B cell (primary cell): ENCODE measurements at regions of chr5 and their contacts with region 1.

Region 1: DNA sequence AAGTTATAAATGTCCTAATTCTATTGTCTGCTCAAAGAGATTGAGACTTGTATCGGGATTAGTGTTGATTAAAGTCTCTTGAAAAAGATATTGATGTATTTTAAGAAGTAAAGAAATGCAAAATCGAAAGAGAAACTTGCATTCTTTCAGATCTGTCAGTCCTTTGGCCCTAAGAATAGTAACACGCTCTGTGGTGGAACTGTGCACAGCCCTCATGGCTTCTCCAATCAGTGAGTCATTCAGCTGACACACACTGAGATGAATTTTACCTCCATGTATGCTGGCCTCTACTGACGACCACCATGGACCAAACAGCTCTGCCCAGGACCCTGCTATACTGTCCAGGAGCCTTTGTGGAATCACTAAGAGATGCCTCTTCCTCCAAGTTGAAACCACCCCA is 232.4 kb downstream of the ESM1 start:
- DNase-seq: peak; percentile 47
- ATAC-seq: peak; percentile 84
- H3K4me3 ChIP-seq: peak overlapping the region in 4 of 5 experiments; percentile 5 to 54 (median 21)
- H3K4me3 Mint-ChIP-seq: peak overlapping the region; percentile 55
- H3K27ac ChIP-seq: peak overlapping the region; percentile 67 to 75
- H3K27ac Mint-ChIP-seq: peak overlapping the region; percentile 87
- H3K4me1 ChIP-seq: peaks cover 48 to 57% of the 10 kb centered on the region in 2 donors
- H3K4me1 Mint-ChIP-seq: peaks cover 61% of the 10 kb centered on the region
- H3K27me3 ChIP-seq: no peaks in the 10 kb centered on the region
- H3K27me3 Mint-ChIP-seq: no peaks in the 10 kb centered on the region
- CTCF ChIP-seq: no peak

Region 2: DNA sequence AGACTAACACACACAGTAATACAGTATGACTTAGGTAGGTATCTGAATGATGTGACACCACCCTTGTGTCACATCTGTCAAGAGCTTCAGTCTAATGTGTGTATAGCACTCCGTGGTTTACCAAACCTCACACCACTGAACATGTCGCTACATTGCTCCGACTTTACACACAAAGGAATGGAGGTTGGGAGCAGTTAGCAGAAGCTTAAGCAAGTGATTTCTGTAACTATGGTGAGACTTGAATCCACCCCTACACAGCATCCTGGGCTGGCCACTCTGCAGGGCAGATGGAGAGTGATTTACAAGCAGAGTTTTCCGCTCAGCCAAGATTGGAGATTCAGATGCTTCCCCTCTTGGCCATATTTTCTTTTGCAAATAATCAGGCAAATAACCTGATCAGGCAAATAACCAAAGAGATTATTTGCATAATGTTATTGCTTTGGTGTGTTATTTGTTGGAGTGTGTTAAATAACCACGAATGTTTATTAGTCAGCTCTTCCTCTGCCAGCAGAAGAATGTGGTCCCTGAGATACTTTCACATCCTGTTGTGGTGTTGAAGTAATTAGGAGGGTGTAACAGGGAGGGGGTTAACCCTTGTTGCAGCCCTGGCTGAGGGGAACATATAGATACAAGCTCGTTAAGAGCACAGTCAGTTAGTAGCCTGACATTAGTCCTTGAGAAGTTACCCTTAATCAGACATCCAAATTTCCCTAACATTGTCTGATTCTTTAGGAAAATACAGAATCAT is 142.7 kb before region 1 on chr5:
- CTCF ChIA-PET with region 1: interaction called, 3 read pairs
- POLR2A ChIA-PET with region 1: no interaction called
- intact Hi-C with region 1: loop called (anchors 2 kb)
- DNase-seq: peak; percentile 85
- ATAC-seq: peak; percentile 95
- H3K4me3 ChIP-seq: peak overlapping the region in 2 of 5 experiments; percentile 9 to 45
- H3K4me3 Mint-ChIP-seq: peak overlapping the region; percentile 52
- H3K27ac ChIP-seq: peak overlapping the region; percentile 50 to 57
- H3K27ac Mint-ChIP-seq: peak overlapping the region; percentile 82
- H3K4me1 ChIP-seq: peaks cover 32 to 34% of the 10 kb centered on the region in 2 donors
- H3K4me1 Mint-ChIP-seq: peaks cover 46% of the 10 kb centered on the region
- H3K27me3 ChIP-seq: no peaks in the 10 kb centered on the region
- H3K27me3 Mint-ChIP-seq: no peaks in the 10 kb centered on the region
- CTCF ChIP-seq: no peak

Region 3: GRCh38 chr5:54646356-54647101 is 106.5 kb before region 1 on chr5:
- CTCF ChIA-PET with region 1: interaction called, 3 read pairs
- POLR2A ChIA-PET with region 1: no interaction called
- intact Hi-C with region 1: loop called (anchors 1 kb)
- DNase-seq: peak; percentile 88
- ATAC-seq: peak; percentile 89
- H3K4me3 ChIP-seq: peak overlapping the region; percentile 7 to 49 (median 41)
- H3K4me3 Mint-ChIP-seq: peak overlapping the region; percentile 79
- H3K27ac ChIP-seq: peak overlapping the region; percentile 87 to 88
- H3K27ac Mint-ChIP-seq: peak overlapping the region; percentile 98
- H3K4me1 ChIP-seq: peaks cover 61 to 67% of the 10 kb centered on the region in 2 donors
- H3K4me1 Mint-ChIP-seq: peaks cover 68% of the 10 kb centered on the region
- H3K27me3 ChIP-seq: no peaks in the 10 kb centered on the region
- H3K27me3 Mint-ChIP-seq: no peaks in the 10 kb centered on the region
- CTCF ChIP-seq: no peak

Region 4: GRCh38 chr5:54772684-54773083 is 19.6 kb after region 1 on chr5:
- CTCF ChIA-PET with region 1: interaction called, 7 read pairs
- POLR2A ChIA-PET with region 1: no interaction called
- intact Hi-C with region 1: loop called (anchors 2 kb)
- DNase-seq: peak; percentile 69
- ATAC-seq: peak; percentile 75
- H3K4me3 ChIP-seq: no peak overlapping the region
- H3K4me3 Mint-ChIP-seq: peak overlapping the region; percentile 62
- H3K27ac ChIP-seq: peak overlapping the region; percentile 69 to 84
- H3K27ac Mint-ChIP-seq: peak overlapping the region; percentile 90
- H3K4me1 ChIP-seq: peaks cover 40 to 49% of the 10 kb centered on the region in 2 donors
- H3K4me1 Mint-ChIP-seq: peaks cover 75% of the 10 kb centered on the region
- H3K27me3 ChIP-seq: no peaks in the 10 kb centered on the region
- H3K27me3 Mint-ChIP-seq: peaks cover 2% of the 10 kb centered on the region
- CTCF ChIP-seq: no peak

Region 5: DNA sequence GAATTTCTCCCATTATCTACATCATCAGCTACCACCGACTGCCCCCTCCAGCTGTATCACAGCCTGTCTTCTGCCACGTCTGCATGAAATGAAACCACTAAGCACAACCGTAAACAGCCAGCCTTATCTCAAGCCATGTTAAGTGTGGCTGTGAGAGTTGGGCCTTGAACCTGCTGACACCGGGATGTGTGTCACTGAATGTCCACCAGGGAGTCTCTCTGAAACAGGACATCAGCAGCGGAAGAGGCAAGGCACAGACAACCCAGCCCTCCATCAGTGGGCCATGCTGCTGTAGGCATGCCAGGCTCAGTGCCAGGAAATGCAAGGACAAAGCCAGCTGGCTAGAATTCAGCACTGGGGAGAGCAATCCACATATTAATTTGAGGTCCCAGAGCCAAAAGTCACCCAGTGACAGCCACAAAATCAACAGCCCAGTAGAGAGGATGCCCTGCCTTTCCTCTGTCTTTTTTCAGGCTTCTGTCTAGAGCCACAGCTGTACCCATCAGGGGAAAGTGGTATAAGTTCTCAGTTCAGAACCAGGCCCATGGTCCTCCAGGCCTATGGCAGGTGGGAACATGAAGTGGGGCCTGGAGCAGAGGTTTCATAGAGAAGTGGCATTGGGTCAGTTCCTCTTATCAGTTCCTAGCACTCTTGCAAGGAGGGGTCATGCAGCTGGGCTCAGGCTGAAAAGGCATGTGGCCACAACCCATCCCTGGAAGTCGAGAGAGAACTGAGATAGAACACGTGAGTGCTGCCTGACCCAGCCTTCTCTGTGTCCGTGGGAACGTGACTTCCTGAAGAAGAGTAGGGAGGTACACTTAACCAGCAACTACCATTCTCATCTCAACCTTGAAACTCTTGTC is 32.9 kb after region 1 on chr5:
- CTCF ChIA-PET with region 1: no interaction called
- POLR2A ChIA-PET with region 1: no interaction called
- intact Hi-C with region 1: loop called (anchors 1 kb)
- DNase-seq: peak; percentile 76
- ATAC-seq: peak; percentile 92
- H3K4me3 ChIP-seq: no peak overlapping the region
- H3K4me3 Mint-ChIP-seq: peak overlapping the region; percentile 24
- H3K27ac ChIP-seq: peak overlapping the region; percentile 58 to 62
- H3K27ac Mint-ChIP-seq: peak overlapping the region; percentile 83
- H3K4me1 ChIP-seq: peaks cover 21% of the 10 kb centered on the region in 2 donors
- H3K4me1 Mint-ChIP-seq: peaks cover 29% of the 10 kb centered on the region
- H3K27me3 ChIP-seq: no peaks in the 10 kb centered on the region
- H3K27me3 Mint-ChIP-seq: no peaks in the 10 kb centered on the region
- CTCF ChIP-seq: no peak

Region 6: DNA sequence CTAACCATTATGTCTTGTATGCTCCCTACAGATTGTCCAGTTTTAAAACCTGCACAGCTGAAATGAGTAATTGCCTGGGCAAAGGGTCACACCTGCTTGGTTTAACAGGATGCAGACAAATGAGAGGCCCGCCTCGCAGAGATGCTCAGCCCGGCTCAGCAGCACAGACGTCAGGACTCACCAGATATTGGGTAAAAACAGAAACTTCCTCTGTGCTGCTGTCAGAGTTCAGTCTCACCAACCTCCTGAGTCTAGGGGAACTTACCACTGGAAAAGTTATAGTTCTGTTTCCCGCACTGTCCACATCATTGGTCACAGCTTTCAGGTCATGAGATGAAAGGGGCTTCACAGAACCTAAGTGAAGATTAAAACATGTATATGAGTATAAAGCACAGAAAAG is 79.8 kb after region 1 on chr5:
- CTCF ChIA-PET with region 1: no interaction called
- POLR2A ChIA-PET with region 1: no interaction called
- intact Hi-C with region 1: loop called (anchors 5 kb)
- DNase-seq: peak; percentile 62
- ATAC-seq: peak; percentile 85
- H3K4me3 ChIP-seq: no peak overlapping the region
- H3K4me3 Mint-ChIP-seq: peak overlapping the region; percentile 46
- H3K27ac ChIP-seq: peak overlapping the region; percentile 48 to 83
- H3K27ac Mint-ChIP-seq: peak overlapping the region; percentile 75
- H3K4me1 ChIP-seq: peaks cover 25% of the 10 kb centered on the region in 2 donors
- H3K4me1 Mint-ChIP-seq: peaks cover 38% of the 10 kb centered on the region
- H3K27me3 ChIP-seq: no peaks in the 10 kb centered on the region
- H3K27me3 Mint-ChIP-seq: no peaks in the 10 kb centered on the region
- CTCF ChIP-seq: no peak